CD8-positive, alpha-beta T cell (primary cell): ENCODE measurements at regions of chr19 and their contacts with region 1.

Region 1: DNA sequence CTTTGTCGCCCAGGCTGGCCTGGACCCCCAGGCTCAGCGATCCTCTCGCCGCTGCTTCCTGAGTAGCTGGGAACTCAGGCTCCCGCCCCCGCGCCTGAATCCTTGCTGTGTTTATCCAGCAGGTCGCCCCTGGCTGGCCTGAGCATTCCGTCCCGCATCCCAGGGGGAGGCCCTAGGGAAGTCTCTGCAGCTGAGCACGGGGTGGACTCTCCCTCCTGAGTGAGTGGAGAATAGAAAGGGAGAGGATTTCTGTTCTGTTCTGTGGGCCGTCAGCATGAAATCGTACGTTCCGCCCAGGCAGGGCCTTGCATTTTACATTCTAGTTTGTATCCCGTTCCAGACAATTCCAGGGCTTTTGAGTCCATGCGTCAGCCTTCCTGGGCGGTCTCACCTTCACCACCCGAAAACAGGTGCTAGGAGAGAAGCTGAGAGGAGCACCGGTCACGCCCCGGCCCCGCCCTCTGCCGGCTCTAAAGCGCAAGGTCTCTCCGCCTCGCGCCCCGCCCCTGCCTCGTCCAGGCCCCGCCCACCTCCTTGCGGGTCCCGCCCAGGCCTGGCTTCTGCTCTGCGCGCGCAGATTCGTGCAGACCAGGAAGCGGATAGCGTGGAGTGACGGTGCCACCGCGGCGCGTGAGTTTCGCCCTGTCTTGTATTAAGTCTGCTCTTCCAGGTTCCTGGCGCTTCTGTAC is at the start of gene ZNF761:
- DNase-seq: peak; percentile 95 to 100 (median 97)
- ATAC-seq: peak; percentile 99
- H3K4me3 ChIP-seq: peak within 1 kb of the TSS; percentile 71 to 85
- H3K4me3 Mint-ChIP-seq: peak within 1 kb of the TSS; percentile 98
- H3K27ac ChIP-seq: peak within 1 kb of the TSS; percentile 79 to 84
- H3K27ac Mint-ChIP-seq: peak within 1 kb of the TSS; percentile 97
- H3K4me1 ChIP-seq: peaks cover 11% of the 10 kb centered on the region
- H3K4me1 Mint-ChIP-seq: peaks cover 41% of the 10 kb centered on the region
- H3K27me3 ChIP-seq: no peaks in the 10 kb centered on the region
- H3K27me3 Mint-ChIP-seq: no peaks in the 10 kb centered on the region
- CTCF ChIP-seq: peak; percentile 47
- total RNA-seq, gene ZNF761: 8.4 to 9.2 TPM

Region 2: GRCh38 chr19:53254411-53255341 is 176.9 kb before region 1 on chr19 and contains the start of gene ZNF677:
- CTCF ChIA-PET with region 1: no interaction called
- POLR2A ChIA-PET with region 1: no interaction called
- intact Hi-C with region 1: loop called in 1 of 2 experiments (anchors 1 kb)
- DNase-seq: peak; percentile 60 to 90 (median 82)
- ATAC-seq: peak; percentile 99
- H3K4me3 ChIP-seq: peak within 1 kb of the TSS; percentile 75 to 98
- H3K4me3 Mint-ChIP-seq: peak within 1 kb of the TSS; percentile 84
- H3K27ac ChIP-seq: peak within 1 kb of the TSS in 1 of 2 experiments; percentile 75
- H3K27ac Mint-ChIP-seq: peak within 1 kb of the TSS; percentile 81
- H3K4me1 ChIP-seq: peaks cover 11% of the 10 kb centered on the region
- H3K4me1 Mint-ChIP-seq: peaks cover 9% of the 10 kb centered on the region
- H3K27me3 ChIP-seq: no peaks in the 10 kb centered on the region
- H3K27me3 Mint-ChIP-seq: no peaks in the 10 kb centered on the region
- CTCF ChIP-seq: no peak
- total RNA-seq, gene ZNF677: 7.8 to 8.3 TPM

Region 3: GRCh38 chr19:53467485-53468262 is 36.1 kb after region 1 on chr19 and contains the start of gene ZNF813:
- CTCF ChIA-PET with region 1: interaction called, 3 read pairs
- POLR2A ChIA-PET with region 1: no interaction called
- intact Hi-C with region 1: loop called (anchors 1 kb)
- DNase-seq: peak; percentile 93 to 98 (median 95)
- ATAC-seq: peak; percentile 98
- H3K4me3 ChIP-seq: peak within 1 kb of the TSS; percentile 73 to 91
- H3K4me3 Mint-ChIP-seq: peak within 1 kb of the TSS; percentile 92
- H3K27ac ChIP-seq: peak within 1 kb of the TSS; percentile 64 to 79
- H3K27ac Mint-ChIP-seq: peak within 1 kb of the TSS; percentile 89
- H3K4me1 ChIP-seq: peaks cover 7% of the 10 kb centered on the region
- H3K4me1 Mint-ChIP-seq: peaks cover 26% of the 10 kb centered on the region
- H3K27me3 ChIP-seq: no peaks in the 10 kb centered on the region
- H3K27me3 Mint-ChIP-seq: peaks cover 18% of the 10 kb centered on the region
- CTCF ChIP-seq: no peak
- total RNA-seq, gene ZNF813: 3.8 TPM